ENCODE measurements at regions of chr7 and their contacts with region 1.

Region 1: DNA sequence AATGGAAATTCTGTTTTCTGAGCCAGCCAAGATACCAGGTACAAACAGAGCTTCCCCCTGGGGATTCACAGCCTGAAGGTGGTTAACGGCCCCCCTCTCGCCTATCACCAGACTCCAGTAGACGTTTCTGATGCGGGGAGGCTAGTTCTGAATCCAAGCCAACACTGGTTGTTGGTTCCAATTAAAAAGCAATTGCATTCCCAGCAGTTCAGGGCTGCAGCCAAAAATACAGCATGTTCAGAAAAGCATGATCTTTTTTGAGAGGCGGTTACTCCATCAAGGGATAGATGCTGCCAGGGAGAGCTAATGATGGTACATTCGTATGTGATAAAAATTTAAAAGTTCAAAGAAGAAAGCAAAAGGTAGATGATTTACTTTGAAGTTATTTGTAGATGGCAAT is 481.0 kb downstream of the GALNT17 start:
- DNase-seq: no peak
- ATAC-seq: peak; percentile 58

Region 2: GRCh38 chr7:71237945-71238344 is 375.0 kb before region 1 on chr7:
- intact Hi-C with region 1: loop called (anchors 10 kb)
- DNase-seq: no peak
- ATAC-seq: peak; percentile 90

Region 3: GRCh38 chr7:71661671-71662224 is 48.8 kb after region 1 on chr7:
- intact Hi-C with region 1: loop called (anchors 5 kb)
- DNase-seq: no peak
- ATAC-seq: peak; percentile 90

Region 4: GRCh38 chr7:71723859-71724258 is 110.9 kb after region 1 on chr7:
- intact Hi-C with region 1: loop called (anchors 10 kb)
- DNase-seq: no peak
- ATAC-seq: no peak

Measured in Right ventricle myocardium inferior (tissue), 1 donor.